IMR-90 (cell line): ENCODE measurements at regions of chr3 and their contacts with region 1.

Region 1: DNA sequence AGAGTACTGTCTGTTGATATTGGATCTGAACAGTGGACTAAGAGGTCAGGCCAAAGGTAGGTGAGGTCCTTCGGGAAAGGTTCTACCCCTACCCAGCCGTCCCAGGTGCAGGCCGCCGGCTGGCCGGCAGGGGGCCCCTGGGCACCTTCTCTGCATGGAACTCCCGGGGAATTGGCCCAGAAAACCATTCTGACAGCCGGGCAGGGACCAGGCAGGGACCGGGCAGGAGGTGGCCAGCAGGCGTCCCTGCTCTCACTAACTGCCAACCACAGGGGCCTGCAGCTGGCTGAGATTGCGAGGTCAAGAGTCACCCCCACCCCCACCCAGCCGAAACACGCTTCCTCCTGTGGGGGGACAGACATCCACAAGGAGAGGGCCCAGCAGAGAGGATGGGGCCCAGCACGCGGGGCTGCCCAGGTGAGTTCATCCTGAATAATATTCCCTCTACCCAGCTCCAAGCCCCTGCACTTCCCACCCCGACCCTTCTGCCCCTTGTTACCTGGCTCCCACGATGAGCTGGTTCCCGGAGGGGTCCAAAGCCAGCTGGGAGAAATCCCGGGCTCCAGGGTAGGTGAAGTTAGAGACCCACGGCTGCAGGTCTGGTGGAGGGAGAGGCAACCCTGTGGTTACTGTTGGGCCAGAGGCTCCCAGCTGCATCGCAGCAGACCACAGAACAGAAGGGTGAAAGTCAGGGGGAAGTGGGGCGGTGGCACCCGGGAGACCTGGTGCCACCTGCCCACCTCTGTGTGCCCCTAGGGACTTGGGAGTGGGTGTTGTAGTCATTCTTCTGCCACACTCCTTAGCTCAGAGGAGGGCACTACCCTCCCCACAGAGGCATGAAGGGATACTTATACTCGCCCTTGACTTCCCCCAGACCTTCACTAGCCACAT is 84.4 kb downstream of the SEMA5B start:
- DNase-seq: peak; percentile 40
- ATAC-seq: peak; percentile 98
- H3K4me3 ChIP-seq: no peak overlapping the region
- H3K27ac ChIP-seq: no peak overlapping the region
- H3K4me1 ChIP-seq: peaks cover 1% of the 10 kb centered on the region; the same call in 1 of the 2 replicates
- H3K27me3 ChIP-seq: peaks cover 47% of the 10 kb centered on the region
- CTCF ChIP-seq: peak; percentile 90
- POLR2A ChIP-seq: no peak
- RAD21 ChIP-seq: peak; percentile 86

Region 2: GRCh38 chr3:122745346-122746021 is 197.7 kb before region 1 on chr3:
- CTCF ChIA-PET with region 1: no interaction called
- POLR2A ChIA-PET with region 1: no interaction called
- dilution Hi-C with region 1: no loop called
- in situ Hi-C with region 1: no loop called
- intact Hi-C with region 1: no loop called
- DNase-seq: peak; percentile 90
- ATAC-seq: peak; percentile 96
- H3K4me3 ChIP-seq: no peak overlapping the region
- H3K27ac ChIP-seq: no peak overlapping the region
- H3K4me1 ChIP-seq: no peaks in the 10 kb centered on the region; the same call in 1 of the 2 replicates
- H3K27me3 ChIP-seq: no peaks in the 10 kb centered on the region
- CTCF ChIP-seq: no peak
- POLR2A ChIP-seq: no peak
- RAD21 ChIP-seq: no peak

Region 3: DNA sequence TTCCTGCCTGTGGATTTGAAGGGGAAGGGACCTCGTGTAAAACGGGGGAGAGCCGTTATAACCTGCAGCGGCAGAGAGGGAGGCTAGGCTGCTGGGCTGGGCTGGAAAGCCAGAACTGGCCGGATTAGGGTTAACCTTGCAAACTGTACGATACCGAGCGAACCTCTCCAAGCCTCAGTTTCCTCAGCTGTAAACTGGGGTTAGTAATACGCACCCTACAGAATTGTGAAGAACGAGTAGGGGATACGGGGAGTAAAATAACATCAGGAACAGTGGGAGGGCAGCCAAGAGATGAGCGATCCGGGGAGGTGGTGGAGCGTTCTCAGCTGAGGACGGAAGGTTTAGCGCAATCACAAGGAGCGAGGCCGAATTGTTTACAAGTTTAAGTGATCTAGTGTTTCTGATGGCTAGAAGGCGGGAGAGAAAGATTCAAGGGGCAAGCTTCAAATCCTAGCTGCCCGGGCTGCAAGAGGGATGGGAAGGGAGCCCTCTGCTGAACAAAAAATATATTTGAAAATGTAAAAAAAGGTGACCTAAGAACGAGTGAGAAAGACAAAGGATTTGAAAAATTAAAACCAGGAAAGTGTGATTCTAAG is 85.1 kb after region 1 on chr3:
- CTCF ChIA-PET with region 1: interaction called, 5 read pairs
- POLR2A ChIA-PET with region 1: no interaction called
- dilution Hi-C with region 1: no loop called
- in situ Hi-C with region 1: loop called (anchors 10 kb)
- intact Hi-C with region 1: loop called (anchors 1 kb)
- DNase-seq: peak; percentile 72
- ATAC-seq: peak; percentile 79
- H3K4me3 ChIP-seq: peak overlapping the region; percentile 24
- H3K27ac ChIP-seq: no peak overlapping the region
- H3K4me1 ChIP-seq: peaks cover 5% of the 10 kb centered on the region; the same call in 1 of the 2 replicates
- H3K27me3 ChIP-seq: peaks cover 87% of the 10 kb centered on the region
- CTCF ChIP-seq: peak; percentile 65
- POLR2A ChIP-seq: no peak
- RAD21 ChIP-seq: peak; percentile 73

Region 4: DNA sequence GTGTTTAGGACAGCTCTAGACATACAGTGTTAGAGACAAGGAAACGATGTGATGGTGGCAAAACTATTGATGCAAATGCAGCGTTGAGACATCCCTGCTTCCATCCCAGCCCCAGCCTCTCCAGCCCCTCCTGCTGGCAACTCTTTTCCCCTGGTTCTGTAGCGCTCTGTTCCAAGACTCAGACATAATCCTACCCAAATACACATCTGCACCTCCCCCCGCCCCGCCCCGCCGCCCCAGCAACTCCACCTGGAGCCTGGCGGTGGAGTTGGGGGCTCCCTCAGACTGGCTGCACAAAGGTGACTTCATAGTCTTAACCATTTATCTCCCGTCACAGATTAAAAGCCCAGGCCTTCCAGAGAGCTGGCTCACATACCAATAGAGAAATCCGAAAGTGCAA is 251.4 kb after region 1 on chr3:
- CTCF ChIA-PET with region 1: no interaction called
- POLR2A ChIA-PET with region 1: no interaction called
- dilution Hi-C with region 1: no loop called
- in situ Hi-C with region 1: no loop called
- intact Hi-C with region 1: loop called (anchors 2 kb)
- DNase-seq: peak; percentile 19
- ATAC-seq: peak; percentile 96
- H3K4me3 ChIP-seq: no peak overlapping the region
- H3K27ac ChIP-seq: no peak overlapping the region
- H3K4me1 ChIP-seq: no peaks in the 10 kb centered on the region
- H3K27me3 ChIP-seq: no peaks in the 10 kb centered on the region
- CTCF ChIP-seq: peak; percentile 50
- POLR2A ChIP-seq: no peak
- RAD21 ChIP-seq: peak; percentile 48

Region 5: GRCh38 chr3:123258811-123259420 is 315.7 kb after region 1 on chr3:
- CTCF ChIA-PET with region 1: no interaction called
- POLR2A ChIA-PET with region 1: no interaction called
- dilution Hi-C with region 1: no loop called
- in situ Hi-C with region 1: no loop called
- intact Hi-C with region 1: loop called (anchors 1 kb)
- DNase-seq: peak; percentile 69
- ATAC-seq: peak; percentile 96
- H3K4me3 ChIP-seq: no peak overlapping the region
- H3K27ac ChIP-seq: no peak overlapping the region
- H3K4me1 ChIP-seq: no peaks in the 10 kb centered on the region
- H3K27me3 ChIP-seq: no peaks in the 10 kb centered on the region
- CTCF ChIP-seq: peak; percentile 76
- POLR2A ChIP-seq: no peak
- RAD21 ChIP-seq: peak; percentile 70